GM10248 (cell line): ENCODE measurements at regions of chr3 and their contacts with region 1.

Region 1: DNA sequence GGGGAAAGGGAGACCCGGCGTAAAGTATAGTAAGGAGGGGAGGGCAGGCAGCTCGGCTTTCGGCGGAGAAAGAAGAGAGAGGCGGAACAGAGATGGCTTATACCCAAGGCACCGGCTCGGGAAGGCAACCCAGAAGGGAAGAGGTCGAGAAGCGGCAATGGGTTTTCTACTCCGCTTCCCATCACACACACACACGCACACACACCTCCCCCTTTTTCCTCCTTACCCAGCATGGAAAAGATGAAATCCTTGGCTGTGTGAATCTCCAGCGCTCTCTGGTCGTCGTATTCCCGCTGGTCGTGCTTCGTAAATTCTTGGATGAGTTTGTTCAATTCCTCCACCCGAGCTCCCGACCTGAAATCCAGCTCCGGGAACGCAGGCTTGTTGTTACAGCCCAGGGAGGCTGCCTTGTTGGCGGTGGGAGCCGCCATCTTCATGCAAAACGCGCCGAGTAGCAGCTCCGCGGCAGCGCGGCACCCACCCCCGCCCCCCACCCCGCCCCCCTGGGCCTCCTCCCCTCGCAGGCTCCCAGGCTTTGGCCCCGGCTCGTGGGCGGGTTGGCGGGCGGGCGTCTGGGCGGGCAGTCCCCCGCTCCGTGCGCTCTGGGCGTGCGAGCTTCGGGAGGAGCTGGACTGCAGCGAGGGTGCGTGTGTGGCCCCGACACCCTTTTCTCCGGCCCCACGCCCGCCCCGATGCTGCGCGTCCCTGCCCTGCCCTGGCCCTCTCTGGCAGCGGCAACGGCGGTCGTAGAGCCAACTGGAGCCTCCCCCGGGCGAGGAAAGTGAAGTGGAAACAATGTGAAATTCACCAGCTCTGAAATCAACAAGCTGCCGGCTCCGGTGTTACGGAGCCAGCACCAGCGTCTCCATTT is at the start of gene MB21D2:
- DNase-seq: peak; percentile 83
- CTCF ChIP-seq: no peak

Region 2: DNA sequence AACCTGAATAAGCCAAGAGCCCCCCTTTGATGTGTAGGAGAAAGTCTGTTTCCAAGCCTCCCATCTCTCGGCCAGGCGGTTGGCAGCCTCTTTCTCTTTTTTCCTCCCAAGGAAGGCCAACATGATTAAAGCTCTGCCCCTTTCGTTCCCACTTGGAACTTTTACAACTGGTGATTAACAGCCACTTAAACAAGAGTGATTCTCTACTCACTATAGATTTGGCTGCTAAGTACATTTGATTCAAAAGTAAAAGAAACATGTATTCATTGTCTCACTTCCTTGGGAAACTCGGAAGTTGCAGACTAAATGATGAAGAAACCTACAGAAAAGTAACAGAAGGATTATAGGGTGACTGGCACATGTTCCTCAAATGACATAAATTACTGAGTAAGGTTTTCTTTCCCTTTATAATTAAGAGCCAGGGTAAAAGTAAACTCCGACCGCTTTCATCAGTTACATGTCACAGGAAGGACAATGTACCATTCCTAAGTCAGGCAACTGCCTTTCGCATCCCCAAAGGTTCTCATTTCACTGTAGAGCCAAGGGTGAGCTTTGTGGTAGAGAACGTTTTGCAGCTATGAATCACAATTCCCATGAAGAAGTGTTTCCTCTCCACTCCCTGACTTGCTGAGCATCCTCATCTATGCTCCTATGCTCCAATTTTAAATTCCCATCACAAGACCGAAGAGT is 72.7 kb before region 1 on chr3:
- CTCF ChIA-PET with region 1: interaction called, 27 read pairs
- POLR2A ChIA-PET with region 1: no interaction called
- DNase-seq: no peak
- CTCF ChIP-seq: no peak

Region 3: DNA sequence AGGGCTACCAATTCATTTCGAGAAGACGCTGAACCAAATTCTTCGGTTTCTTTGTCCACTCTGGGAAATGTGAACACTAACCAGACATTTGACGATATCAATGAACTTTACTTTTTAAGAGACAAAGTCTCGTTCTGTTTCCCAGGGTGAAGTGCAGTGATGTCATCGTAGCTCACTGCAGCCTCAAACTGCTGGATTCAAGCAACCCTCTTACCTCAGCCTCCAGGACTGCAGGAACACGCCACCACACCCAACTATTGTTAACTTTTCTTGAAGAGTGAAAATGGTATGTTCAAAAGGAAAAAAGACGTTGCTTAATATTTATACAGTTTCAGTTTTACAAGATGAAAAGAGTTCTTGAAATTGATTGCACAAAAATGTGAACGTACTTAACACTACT is 30.6 kb before region 1 on chr3:
- CTCF ChIA-PET with region 1: interaction called, 95 read pairs
- POLR2A ChIA-PET with region 1: interaction called, 5 read pairs
- DNase-seq: no peak
- CTCF ChIP-seq: no peak

Region 4: DNA sequence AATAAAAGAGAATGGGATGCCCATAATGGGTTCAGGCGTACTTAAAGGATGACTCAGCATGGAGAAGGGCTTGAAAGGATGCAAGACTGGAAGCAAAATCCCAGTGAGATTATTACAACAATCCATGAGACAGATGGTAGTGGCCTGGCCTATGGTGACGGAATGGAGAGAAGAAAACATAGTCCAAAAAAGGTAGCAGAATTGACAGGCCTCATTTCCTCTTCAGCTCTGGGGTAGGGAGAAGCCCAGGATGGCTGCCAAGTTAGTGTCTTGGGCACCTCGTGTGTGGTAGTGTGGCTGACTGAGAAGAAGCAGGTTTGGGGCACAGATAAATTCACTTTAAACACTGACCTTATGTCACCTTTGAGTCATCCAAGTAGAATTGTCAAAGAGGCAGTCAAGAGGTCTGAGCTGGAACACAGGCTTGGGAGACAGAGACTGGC is 18.1 kb before region 1 on chr3:
- CTCF ChIA-PET with region 1: interaction called, 95 read pairs
- POLR2A ChIA-PET with region 1: interaction called, 6 read pairs
- DNase-seq: no peak
- CTCF ChIP-seq: no peak